Endothelial cell of umbilical vein (primary cell): ENCODE measurements at regions of chr3 and their contacts with region 1.

Region 1: DNA sequence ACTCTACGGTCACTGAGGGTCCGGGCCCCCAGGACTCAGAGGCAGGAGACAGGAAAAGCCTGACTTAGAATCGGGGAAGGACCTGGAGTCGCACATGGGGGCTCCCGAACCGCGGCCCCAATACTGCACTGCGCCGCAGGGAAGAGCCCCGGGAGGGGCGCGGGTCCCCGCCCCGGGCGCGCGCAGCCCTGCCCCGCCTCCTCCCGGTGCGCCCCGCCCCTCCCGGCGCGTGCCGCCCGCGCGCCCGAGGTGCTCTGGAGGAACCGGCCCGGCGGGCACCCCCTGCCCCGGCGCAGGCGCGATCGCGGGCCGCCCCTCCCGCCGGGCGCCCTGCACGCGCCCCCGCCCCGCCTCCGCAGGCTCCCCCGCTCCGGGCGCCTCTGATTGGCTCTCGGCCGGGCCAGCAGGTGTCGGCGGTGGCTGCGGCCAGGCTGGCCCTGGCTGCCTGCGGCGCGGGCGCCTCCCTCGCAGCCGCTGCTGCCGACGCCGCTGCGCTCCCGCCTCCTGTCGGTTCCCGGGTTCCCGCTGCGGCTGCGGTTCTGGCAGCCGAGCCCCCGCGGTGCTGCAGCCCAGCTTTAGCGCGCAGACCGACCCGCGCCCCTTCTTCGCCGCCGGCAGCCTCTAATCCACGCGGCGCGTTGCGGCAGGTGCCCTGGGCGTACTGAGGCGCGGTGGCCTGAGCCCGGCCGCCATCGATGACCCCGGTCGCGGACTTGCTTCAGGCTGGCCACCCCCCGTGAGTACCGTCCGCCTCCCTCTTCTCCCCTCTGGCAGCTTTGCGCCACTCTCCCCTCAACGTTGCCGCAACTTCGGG is at the start of gene MYRIP:
- DNase-seq: peak; percentile 81
- H3K4me3 ChIP-seq: peak within 1 kb of the TSS; percentile 61 to 79 (median 70)
- H3K27ac ChIP-seq: no peak within 1 kb of the TSS
- H3K4me1 ChIP-seq: peaks cover 28% of the 10 kb centered on the region
- H3K27me3 ChIP-seq: no peaks in the 10 kb centered on the region
- CTCF ChIP-seq: no peak
- POLR2A ChIP-seq: peak; percentile 59
- total RNA-seq, gene MYRIP: 8.9 and 11.9 TPM in 2 replicates

Region 2: DNA sequence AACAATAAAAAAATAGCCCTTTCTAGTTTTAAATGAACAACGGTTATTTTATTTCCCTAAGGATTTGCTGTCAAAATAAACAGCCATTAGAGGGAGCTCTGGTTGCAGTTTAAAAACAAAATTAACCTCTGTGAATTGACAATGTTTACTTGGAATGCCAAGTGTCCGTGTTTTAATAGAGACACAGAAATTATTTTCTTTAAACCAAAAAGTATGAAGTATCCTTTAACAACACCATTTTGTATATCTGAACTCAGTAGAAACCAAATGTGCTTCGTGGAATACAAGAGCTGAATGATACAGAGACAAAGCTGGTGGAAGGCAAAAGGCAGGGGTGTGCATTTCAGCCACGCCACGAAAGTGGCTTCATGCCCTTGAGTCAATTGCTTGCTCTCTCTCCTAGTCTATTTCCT is 267.5 kb before region 1 on chr3:
- CTCF ChIA-PET with region 1: interaction called, 11 read pairs
- POLR2A ChIA-PET with region 1: no interaction called
- dilution Hi-C with region 1: no loop called
- intact Hi-C with region 1: loop called (anchors 2 kb)
- DNase-seq: peak; percentile 79
- H3K4me3 ChIP-seq: peak overlapping the region in 1 of 3 experiments; percentile 40
- H3K27ac ChIP-seq: peak overlapping the region; percentile 10
- H3K4me1 ChIP-seq: peaks cover 9% of the 10 kb centered on the region
- H3K27me3 ChIP-seq: no peaks in the 10 kb centered on the region
- CTCF ChIP-seq: peak; percentile 40 to 49
- POLR2A ChIP-seq: no peak

Region 3: DNA sequence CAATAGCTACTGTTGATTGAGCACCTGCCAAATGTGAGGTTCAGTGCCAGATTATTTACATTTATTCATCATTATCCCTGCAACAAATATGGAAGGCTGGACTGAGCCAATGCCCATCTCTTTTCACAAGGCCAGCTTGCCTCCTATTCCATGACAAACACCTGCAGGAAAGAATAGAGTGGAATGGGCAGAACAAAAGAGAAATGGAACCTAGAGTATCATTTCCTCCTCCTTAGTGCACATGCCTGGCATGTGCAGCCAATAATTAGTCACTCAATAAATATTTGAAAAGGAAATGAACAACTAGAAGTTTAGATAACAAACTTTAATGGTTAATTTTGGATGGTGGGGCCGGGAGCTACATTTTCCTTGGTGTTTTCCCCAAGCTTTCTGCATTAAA is 61.4 kb before region 1 on chr3:
- CTCF ChIA-PET with region 1: interaction called, 8 read pairs
- POLR2A ChIA-PET with region 1: no interaction called
- dilution Hi-C with region 1: no loop called
- intact Hi-C with region 1: loop called (anchors 1 kb)
- DNase-seq: peak; percentile 78
- H3K4me3 ChIP-seq: no peak overlapping the region
- H3K27ac ChIP-seq: peak overlapping the region; percentile 87
- H3K4me1 ChIP-seq: peaks cover 53% of the 10 kb centered on the region
- H3K27me3 ChIP-seq: no peaks in the 10 kb centered on the region
- CTCF ChIP-seq: no peak
- POLR2A ChIP-seq: no peak

Region 4: DNA sequence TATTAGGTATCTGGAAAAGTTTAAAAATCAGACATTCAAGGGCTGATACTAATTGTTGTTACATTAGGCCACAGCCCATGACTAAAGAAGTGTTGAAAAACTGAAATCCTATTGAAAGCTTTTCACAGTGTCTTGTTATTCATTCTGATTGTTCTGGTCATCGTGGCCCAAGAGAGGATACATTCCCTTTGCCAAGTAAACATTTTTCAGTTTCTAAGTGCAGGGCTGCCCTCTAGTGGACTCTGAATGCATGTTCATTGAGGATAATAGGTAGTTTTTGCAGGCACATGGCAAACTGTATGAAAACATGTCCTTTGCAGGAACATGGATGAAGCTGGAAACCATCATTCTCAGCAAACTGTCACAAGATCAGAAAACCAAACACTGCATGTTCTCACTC is 181.1 kb after region 1 on chr3:
- CTCF ChIA-PET with region 1: interaction called, 61 read pairs
- POLR2A ChIA-PET with region 1: no interaction called
- dilution Hi-C with region 1: no loop called
- intact Hi-C with region 1: loop called (anchors 1 kb)
- DNase-seq: peak; percentile 70
- H3K4me3 ChIP-seq: no peak overlapping the region
- H3K27ac ChIP-seq: no peak overlapping the region
- H3K4me1 ChIP-seq: no peaks in the 10 kb centered on the region
- H3K27me3 ChIP-seq: no peaks in the 10 kb centered on the region
- CTCF ChIP-seq: peak; percentile 34 to 36
- POLR2A ChIP-seq: no peak

Region 5: GRCh38 chr3:40170395-40170794 is 361.0 kb after region 1 on chr3:
- CTCF ChIA-PET with region 1: interaction called, 11 read pairs
- POLR2A ChIA-PET with region 1: no interaction called
- dilution Hi-C with region 1: no loop called
- intact Hi-C with region 1: no loop called
- DNase-seq: no peak
- H3K4me3 ChIP-seq: no peak overlapping the region
- H3K27ac ChIP-seq: no peak overlapping the region
- H3K4me1 ChIP-seq: no peaks in the 10 kb centered on the region
- H3K27me3 ChIP-seq: no peaks in the 10 kb centered on the region
- CTCF ChIP-seq: no peak
- POLR2A ChIP-seq: no peak